OCI-LY7 (cell line): ENCODE measurements at regions of chr2 and their contacts with region 1.

Region 1: GRCh38 chr2:64750817-64751285 is 97.1 kb upstream of the SERTAD2 start:
- DNase-seq: peak; percentile 99
- H3K4me3 ChIP-seq: peak overlapping the region; percentile 85
- H3K27ac ChIP-seq: peak overlapping the region; percentile 92
- H3K4me1 ChIP-seq: peaks cover 44% of the 10 kb centered on the region
- CTCF ChIP-seq: 0 out of 2 replicates have a peak, but pooled peaks have one; percentile 14

Region 2: DNA sequence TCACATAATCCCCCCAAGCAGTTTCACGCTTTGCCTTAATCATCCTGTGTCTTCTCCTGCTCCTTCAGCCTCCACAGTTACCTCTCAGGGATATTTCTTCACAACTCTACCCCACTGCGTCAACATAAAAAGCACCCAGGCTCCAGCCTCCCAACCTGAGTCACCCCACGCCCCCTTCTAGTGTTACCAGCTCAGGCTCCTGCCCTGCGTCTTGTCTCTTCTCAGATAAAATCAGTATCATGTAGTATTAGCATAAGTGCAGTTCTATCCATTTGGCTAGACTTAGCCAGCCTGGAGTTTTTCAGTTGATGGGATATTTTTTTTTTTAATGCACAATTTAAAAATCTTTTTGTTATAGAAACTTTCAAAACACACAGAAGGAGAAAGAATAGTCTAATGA is 597.0 kb before region 1 on chr2:
- CTCF ChIA-PET with region 1: no interaction called
- POLR2A ChIA-PET with region 1: no interaction called
- intact Hi-C with region 1: no loop called
- DNase-seq: no peak
- H3K4me3 ChIP-seq: no peak overlapping the region
- H3K27ac ChIP-seq: no peak overlapping the region
- H3K4me1 ChIP-seq: no peaks in the 10 kb centered on the region
- CTCF ChIP-seq: no peak

Region 3: GRCh38 chr2:64523666-64524603 is 226.9 kb before region 1 on chr2 and contains the start of gene AFTPH:
- CTCF ChIA-PET with region 1: no interaction called
- POLR2A ChIA-PET with region 1: interaction called, 3 read pairs
- intact Hi-C with region 1: loop called (anchors 10 kb)
- DNase-seq: peak; percentile 99
- H3K4me3 ChIP-seq: peak within 1 kb of the TSS; percentile 84
- H3K27ac ChIP-seq: peak within 1 kb of the TSS; percentile 82
- H3K4me1 ChIP-seq: peaks cover 29% of the 10 kb centered on the region
- CTCF ChIP-seq: no peak
- total RNA-seq, gene AFTPH: 39.0 and 40.6 TPM in 2 replicates

Region 4: DNA sequence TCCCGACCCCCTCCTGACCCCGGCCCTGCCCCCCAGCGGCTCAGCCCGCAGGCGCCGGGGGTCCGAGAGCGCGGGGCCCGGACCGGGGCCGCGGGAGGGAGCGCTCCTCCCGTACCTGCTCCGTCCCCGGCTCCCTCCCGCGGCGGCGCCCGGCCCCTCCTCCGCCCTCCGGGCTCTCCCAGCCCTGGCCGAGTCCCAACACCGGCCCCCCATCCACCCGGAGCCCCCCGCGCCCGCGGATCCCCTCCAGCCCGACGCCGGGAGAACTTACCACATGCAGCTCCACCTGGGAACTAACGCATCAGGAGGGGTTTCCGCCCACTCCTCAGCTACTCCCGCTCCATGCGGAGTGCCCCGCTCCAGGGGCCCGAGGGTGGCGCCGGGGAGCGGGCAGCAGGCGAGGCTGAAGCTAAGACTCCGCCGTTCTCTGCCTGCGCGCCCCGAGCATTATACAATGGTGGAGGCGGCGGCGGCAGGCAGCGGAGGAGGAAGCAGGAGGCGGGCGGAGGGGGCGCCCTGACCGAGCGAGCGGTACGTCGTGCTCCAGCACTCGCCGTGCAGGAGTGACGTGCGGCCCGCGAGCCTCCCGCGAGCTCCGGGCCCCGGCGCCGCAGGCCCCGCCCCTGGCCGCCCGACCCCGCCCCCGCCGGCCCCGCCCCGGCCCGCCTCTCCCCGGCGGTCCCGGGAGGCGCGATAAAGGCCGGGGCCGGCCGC is 97.3 kb before region 1 on chr2 and contains the start of gene SERTAD2:
- CTCF ChIA-PET with region 1: interaction called, 16 read pairs
- POLR2A ChIA-PET with region 1: interaction called, 324 read pairs
- intact Hi-C with region 1: loop called (anchors 1 kb)
- DNase-seq: peak; percentile 95
- H3K4me3 ChIP-seq: peak within 1 kb of the TSS; percentile 93
- H3K27ac ChIP-seq: peak within 1 kb of the TSS; percentile 95
- H3K4me1 ChIP-seq: peaks cover 74% of the 10 kb centered on the region
- CTCF ChIP-seq: peak; percentile 49
- total RNA-seq, gene SERTAD2: 10.7 and 11.5 TPM in 2 replicates

Region 5: GRCh38 chr2:64704161-64704560 is 46.7 kb before region 1 on chr2:
- CTCF ChIA-PET with region 1: no interaction called
- POLR2A ChIA-PET with region 1: interaction called, 12 read pairs
- intact Hi-C with region 1: no loop called
- DNase-seq: no peak
- H3K4me3 ChIP-seq: no peak overlapping the region
- H3K27ac ChIP-seq: no peak overlapping the region
- H3K4me1 ChIP-seq: peaks cover 20% of the 10 kb centered on the region
- CTCF ChIP-seq: no peak

Region 6: GRCh38 chr2:64737547-64737946 is 13.3 kb before region 1 on chr2:
- CTCF ChIA-PET with region 1: interaction called, 5 read pairs
- POLR2A ChIA-PET with region 1: interaction called, 32 read pairs
- intact Hi-C with region 1: no loop called
- DNase-seq: no peak
- H3K4me3 ChIP-seq: no peak overlapping the region
- H3K27ac ChIP-seq: no peak overlapping the region
- H3K4me1 ChIP-seq: peaks cover 27% of the 10 kb centered on the region
- CTCF ChIP-seq: no peak

Region 7: GRCh38 chr2:64839844-64840243 is 89.0 kb after region 1 on chr2:
- CTCF ChIA-PET with region 1: no interaction called
- POLR2A ChIA-PET with region 1: interaction called, 20 read pairs
- intact Hi-C with region 1: no loop called
- DNase-seq: peak; percentile 91
- H3K4me3 ChIP-seq: peak overlapping the region; percentile 5
- H3K27ac ChIP-seq: peak overlapping the region; percentile 83
- H3K4me1 ChIP-seq: peaks cover 45% of the 10 kb centered on the region
- CTCF ChIP-seq: no peak

Region 8: DNA sequence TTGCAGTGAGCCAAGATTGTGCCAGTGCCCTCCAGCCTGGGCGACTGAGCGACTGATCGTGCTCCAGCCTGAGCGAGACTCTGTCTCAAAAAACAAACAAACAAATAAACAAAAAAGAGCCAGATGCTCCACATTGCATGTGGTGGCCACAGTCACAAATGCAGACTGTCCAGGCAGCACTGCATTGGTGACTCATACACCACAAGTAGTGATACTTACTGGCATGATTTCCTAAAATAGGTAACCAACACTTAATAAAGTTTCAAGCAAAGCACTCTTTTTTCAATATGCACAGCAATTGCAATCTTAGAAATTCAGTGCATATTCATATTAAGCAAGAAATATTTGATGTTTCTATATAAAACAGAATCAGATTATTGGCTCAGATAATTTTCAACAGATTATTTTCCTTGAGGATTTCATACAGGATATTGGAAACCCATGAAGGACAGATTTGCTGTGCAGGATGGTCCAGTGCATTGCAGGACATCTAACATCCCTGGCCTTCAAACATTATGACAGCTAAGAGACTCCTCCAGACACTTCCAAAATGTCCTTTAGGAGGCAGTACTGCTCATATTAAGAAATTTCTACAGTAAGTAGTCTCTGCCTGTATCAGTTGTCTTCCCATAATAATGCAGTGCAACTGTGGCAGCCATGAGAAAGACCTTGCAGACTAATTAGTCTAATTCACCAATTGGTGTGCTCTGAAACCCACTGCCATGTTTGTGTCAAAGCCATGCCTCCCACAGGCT is 227.8 kb after region 1 on chr2:
- CTCF ChIA-PET with region 1: no interaction called
- POLR2A ChIA-PET with region 1: no interaction called
- intact Hi-C with region 1: no loop called
- DNase-seq: peak; percentile 32
- H3K4me3 ChIP-seq: no peak overlapping the region
- H3K27ac ChIP-seq: no peak overlapping the region
- H3K4me1 ChIP-seq: peaks cover 9% of the 10 kb centered on the region
- CTCF ChIP-seq: peak; percentile 71

Region 9: GRCh38 chr2:65031341-65032018 is 280.6 kb after region 1 on chr2:
- CTCF ChIA-PET with region 1: no interaction called
- POLR2A ChIA-PET with region 1: interaction called, 7 read pairs
- intact Hi-C with region 1: loop called (anchors 5 kb)
- DNase-seq: peak; percentile 96
- H3K4me3 ChIP-seq: peak overlapping the region; percentile 64
- H3K27ac ChIP-seq: peak overlapping the region; percentile 98
- H3K4me1 ChIP-seq: peaks cover 75% of the 10 kb centered on the region
- CTCF ChIP-seq: no peak

Region 10: DNA sequence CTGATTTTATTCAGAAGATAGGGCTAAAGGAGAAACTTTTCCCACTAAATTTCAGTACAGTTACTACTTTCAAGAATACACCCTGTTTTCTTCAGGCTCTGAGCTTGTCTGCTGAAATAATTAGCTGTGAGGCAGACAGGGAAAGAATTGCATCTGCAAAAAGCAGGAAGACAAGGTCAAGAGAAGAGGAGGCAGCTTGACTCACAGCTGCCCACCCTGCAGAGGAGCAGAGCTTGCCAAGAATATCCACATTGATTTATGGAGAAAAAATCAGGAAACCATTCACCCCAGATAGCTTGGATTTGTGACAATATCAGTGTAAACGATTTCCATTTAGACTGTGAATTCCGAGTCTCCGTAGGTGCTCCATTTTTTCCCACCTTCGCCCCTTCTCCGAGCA is 525.8 kb after region 1 on chr2:
- CTCF ChIA-PET with region 1: no interaction called
- POLR2A ChIA-PET with region 1: no interaction called
- intact Hi-C with region 1: no loop called
- DNase-seq: no peak
- H3K4me3 ChIP-seq: no peak overlapping the region
- H3K27ac ChIP-seq: no peak overlapping the region
- H3K4me1 ChIP-seq: peaks cover 10% of the 10 kb centered on the region
- CTCF ChIP-seq: no peak